Esophagus squamous epithelium (tissue), 5 donors: ENCODE measurements at regions of chr4 and their contacts with region 1.

Region 1: GRCh38 chr4:118417325-118417724 is 64.5 kb upstream of the PRSS12 start:
- DNase-seq: no peak
- H3K4me3 ChIP-seq: no peak overlapping the region
- H3K27ac ChIP-seq: no peak overlapping the region
- H3K4me1 ChIP-seq: peaks cover 0 to 11% (median 3%) of the 10 kb centered on the region in 3 donors
- H3K27me3 ChIP-seq: no peaks in the 10 kb centered on the region
- CTCF ChIP-seq: no peak
- POLR2A ChIP-seq: no peak

Region 2: GRCh38 chr4:118280501-118281218 is 136.7 kb before region 1 on chr4:
- intact Hi-C with region 1: loop called (anchors 10 kb)
- DNase-seq: no peak
- H3K4me3 ChIP-seq: peak overlapping the region in 3 of 4 donors; percentile 80 to 96 (median 93)
- H3K27ac ChIP-seq: peak overlapping the region in 3 of 4 donors; percentile 95 to 98 (median 96)
- H3K4me1 ChIP-seq: peaks cover 0 to 57% (median 14%) of the 10 kb centered on the region in 3 donors
- H3K27me3 ChIP-seq: no peaks in the 10 kb centered on the region
- CTCF ChIP-seq: peak in 4 of 6 experiments; percentile 26 to 57 (median 52)
- POLR2A ChIP-seq: no peak

Region 3: DNA sequence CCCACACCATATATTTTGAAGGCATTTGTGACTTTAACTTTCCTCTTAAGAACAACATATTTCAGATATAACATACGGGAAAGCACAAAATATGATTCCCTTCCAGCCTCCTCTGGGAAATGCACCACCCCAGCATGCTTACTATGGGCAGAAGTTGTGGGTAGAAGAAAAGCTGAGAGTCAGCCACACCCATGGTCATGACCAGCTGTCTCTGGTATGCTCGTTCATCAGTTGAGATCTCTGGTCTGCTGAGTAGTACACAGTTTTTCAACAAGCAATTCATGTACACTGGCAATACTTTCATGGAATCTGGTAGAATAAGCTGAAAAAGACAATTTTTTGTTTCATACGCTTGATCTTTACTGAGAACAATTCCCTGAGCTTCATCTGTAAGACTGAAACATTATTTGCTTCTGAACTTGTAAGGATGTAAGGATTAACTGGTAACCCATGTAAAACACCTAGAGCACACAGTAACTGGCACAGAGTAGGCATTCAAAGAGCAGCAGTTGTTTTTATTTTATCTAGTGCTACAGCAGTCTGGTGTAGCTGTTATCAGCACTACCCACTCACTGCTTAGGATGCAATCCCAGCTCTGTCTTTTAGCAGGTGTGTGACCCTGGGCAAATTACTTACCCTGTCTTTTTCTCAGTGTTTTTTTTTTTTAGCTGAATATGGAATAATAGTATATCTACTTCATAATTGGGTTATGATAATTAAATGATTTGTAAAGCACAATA is 315.4 kb after region 1 on chr4:
- intact Hi-C with region 1: no loop called
- DNase-seq: no peak
- H3K4me3 ChIP-seq: no peak overlapping the region
- H3K27ac ChIP-seq: no peak overlapping the region
- H3K4me1 ChIP-seq: no peaks in the 10 kb centered on the region
- H3K27me3 ChIP-seq: no peaks in the 10 kb centered on the region
- CTCF ChIP-seq: no peak
- POLR2A ChIP-seq: no peak